Heart right ventricle (tissue), 16 donors: ENCODE measurements at regions of chr4 and their contacts with region 1.

Region 1: DNA sequence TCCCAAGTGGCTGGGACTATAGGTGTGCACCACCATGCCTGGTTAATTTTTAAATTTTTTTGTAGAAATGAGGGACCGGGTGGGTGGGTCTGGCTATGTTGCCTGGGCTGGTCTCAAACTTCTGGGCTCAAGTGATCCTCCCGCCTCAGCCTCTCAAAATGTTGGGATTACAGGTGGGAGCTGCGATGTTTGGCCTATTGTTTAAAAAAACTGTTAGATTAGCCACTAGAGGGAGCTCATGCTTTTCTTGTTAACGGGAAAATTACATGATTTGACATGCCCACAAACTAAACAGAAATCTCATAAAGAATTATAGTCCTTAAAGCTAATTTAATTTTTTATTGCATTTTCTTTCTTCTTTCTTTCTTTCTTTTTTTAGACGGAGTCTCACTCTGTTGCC is 5.0 kb upstream of the SDAD1 start:
- DNase-seq: no peak
- ATAC-seq: peak in 4 of 8 donors; percentile 31 to 56 (median 42)
- H3K4me3 ChIP-seq: no peak overlapping the region
- H3K27ac ChIP-seq: no peak overlapping the region
- H3K4me1 ChIP-seq: peaks cover 0 to 6% (median 4%) of the 10 kb centered on the region in 9 donors
- H3K27me3 ChIP-seq: no peaks in the 10 kb centered on the region
- CTCF ChIP-seq: peak; percentile 67 to 83 (median 76)

Region 2: GRCh38 chr4:76087007-76087769 is 91.5 kb after region 1 on chr4:
- intact Hi-C with region 1: loop called in 4 of 10 experiments (anchors 5 kb)
- DNase-seq: peak in 1 of 2 donors; percentile 57
- ATAC-seq: peak; percentile 75 to 90 (median 89)
- H3K4me3 ChIP-seq: peak overlapping the region in 5 of 10 donors; percentile 2 to 38 (median 26)
- H3K27ac ChIP-seq: peak overlapping the region in 2 of 10 donors; percentile 25 to 52
- H3K4me1 ChIP-seq: peaks cover 0 to 61% (median 19%) of the 10 kb centered on the region in 9 donors
- H3K27me3 ChIP-seq: no peaks in the 10 kb centered on the region
- CTCF ChIP-seq: peak; percentile 24 to 70 (median 57)